ENCODE measurements at regions of chr20 and their contacts with region 1.

Region 1: DNA sequence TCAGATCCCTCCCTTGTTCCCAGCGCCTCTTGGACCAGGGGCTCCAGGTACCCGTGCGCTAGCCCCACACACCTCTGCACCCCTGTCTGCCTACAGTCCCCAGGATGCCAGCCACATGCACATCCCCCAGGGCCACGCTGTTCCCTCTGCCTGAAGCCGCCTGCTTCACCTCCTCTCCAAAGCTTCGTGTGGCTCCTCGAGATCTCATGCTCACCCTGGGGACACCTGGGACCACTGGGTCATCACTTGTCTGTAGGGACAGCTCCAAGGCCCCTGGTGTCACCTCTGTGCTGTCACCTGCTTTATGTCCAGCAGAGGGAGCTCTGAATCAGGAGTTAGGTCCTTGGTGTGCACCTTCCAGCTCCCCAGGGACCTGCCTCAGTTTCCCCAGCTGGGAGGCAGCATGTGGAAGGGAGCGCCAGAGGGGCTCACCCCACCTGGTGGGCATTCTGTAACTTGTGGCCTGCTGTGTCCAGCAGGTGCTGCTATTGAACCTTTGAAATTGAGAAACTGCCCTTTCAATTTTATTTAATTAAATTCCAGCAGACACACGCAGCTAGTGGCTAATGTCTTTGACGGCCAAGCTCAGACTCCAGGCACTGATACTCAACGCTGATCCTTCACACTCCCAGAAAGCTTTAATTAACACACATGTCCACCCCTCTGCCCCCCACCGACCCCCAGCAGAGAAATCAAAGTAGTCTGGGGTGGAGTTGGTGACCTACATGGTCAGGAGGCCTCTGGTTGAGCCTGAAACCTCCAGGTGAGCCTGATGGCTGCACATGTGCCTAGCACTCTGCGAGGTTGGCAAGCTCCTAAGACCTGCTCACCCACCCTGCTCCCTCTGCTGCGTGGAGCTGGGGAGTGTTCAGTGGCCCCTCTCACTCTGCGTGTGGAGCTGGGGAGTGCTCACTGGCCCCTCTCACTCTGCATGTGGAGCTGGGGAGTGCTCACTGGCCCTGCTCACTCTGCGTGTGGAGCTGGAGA is 7.6 kb upstream of the YTHDF1 start:
- DNase-seq: peak; percentile 68
- ATAC-seq: peak; percentile 80
- H3K4me3 Mint-ChIP-seq: no peak overlapping the region
- H3K27ac Mint-ChIP-seq: no peak overlapping the region
- H3K4me1 Mint-ChIP-seq: no peaks in the 10 kb centered on the region
- H3K27me3 Mint-ChIP-seq: no peaks in the 10 kb centered on the region
- CTCF ChIP-seq: peak; percentile 97

Region 2: GRCh38 chr20:62793912-62794724 is 429.4 kb before region 1 on chr20:
- CTCF ChIA-PET with region 1: no interaction called
- POLR2A ChIA-PET with region 1: no interaction called
- intact Hi-C with region 1: no loop called
- DNase-seq: peak; percentile 97
- ATAC-seq: peak; percentile 82
- H3K4me3 Mint-ChIP-seq: peak overlapping the region; percentile 83
- H3K27ac Mint-ChIP-seq: peak overlapping the region; percentile 91
- H3K4me1 Mint-ChIP-seq: peaks cover 34% of the 10 kb centered on the region
- H3K27me3 Mint-ChIP-seq: no peaks in the 10 kb centered on the region
- CTCF ChIP-seq: no peak

Region 3: DNA sequence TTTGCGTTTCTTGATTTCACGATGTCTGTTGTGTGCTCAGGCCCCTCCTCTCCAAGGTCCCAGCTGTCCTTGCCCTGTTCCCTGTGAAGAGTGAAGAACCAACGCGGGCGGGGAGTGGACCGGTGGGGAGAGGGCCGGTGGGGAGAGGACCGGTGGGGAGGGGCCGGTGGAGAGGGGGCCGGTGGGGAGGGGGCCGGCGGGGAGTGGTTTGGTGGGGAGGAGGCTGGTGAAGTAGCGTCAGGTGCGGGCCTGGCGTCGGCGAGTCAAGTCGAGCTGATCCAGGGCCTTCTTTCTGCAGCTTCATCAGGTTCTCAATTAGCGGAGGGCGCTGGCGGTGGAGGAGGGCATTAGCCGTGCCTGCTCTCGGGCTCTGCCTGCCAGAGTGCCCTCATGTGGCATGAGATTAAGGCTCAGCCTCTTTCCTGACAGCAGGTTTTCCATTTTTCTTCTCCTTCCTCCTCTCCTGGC is 195.6 kb before region 1 on chr20:
- CTCF ChIA-PET with region 1: no interaction called
- POLR2A ChIA-PET with region 1: no interaction called
- intact Hi-C with region 1: no loop called
- DNase-seq: peak; percentile 59
- ATAC-seq: peak; percentile 55
- H3K4me3 Mint-ChIP-seq: peak overlapping the region; percentile 37
- H3K27ac Mint-ChIP-seq: no peak overlapping the region
- H3K4me1 Mint-ChIP-seq: peaks cover 21% of the 10 kb centered on the region
- H3K27me3 Mint-ChIP-seq: peaks cover 20% of the 10 kb centered on the region
- CTCF ChIP-seq: no peak

Region 4: GRCh38 chr20:63196768-63197470 is 26.6 kb before region 1 on chr20:
- CTCF ChIA-PET with region 1: interaction called, 23 read pairs
- POLR2A ChIA-PET with region 1: no interaction called
- intact Hi-C with region 1: no loop called
- DNase-seq: no peak
- ATAC-seq: no peak
- H3K4me3 Mint-ChIP-seq: no peak overlapping the region
- H3K27ac Mint-ChIP-seq: peak overlapping the region; percentile 75
- H3K4me1 Mint-ChIP-seq: peaks cover 37% of the 10 kb centered on the region
- H3K27me3 Mint-ChIP-seq: no peaks in the 10 kb centered on the region
- CTCF ChIP-seq: no peak

Region 5: GRCh38 chr20:63234739-63235398 is 11.4 kb after region 1 on chr20:
- CTCF ChIA-PET with region 1: interaction called, 95 read pairs
- POLR2A ChIA-PET with region 1: interaction called, 3 read pairs
- intact Hi-C with region 1: no loop called
- DNase-seq: peak; percentile 58
- ATAC-seq: peak; percentile 52
- H3K4me3 Mint-ChIP-seq: peak overlapping the region; percentile 15
- H3K27ac Mint-ChIP-seq: no peak overlapping the region
- H3K4me1 Mint-ChIP-seq: peaks cover 8% of the 10 kb centered on the region
- H3K27me3 Mint-ChIP-seq: peaks cover 21% of the 10 kb centered on the region
- CTCF ChIP-seq: peak; percentile 69

Region 6: DNA sequence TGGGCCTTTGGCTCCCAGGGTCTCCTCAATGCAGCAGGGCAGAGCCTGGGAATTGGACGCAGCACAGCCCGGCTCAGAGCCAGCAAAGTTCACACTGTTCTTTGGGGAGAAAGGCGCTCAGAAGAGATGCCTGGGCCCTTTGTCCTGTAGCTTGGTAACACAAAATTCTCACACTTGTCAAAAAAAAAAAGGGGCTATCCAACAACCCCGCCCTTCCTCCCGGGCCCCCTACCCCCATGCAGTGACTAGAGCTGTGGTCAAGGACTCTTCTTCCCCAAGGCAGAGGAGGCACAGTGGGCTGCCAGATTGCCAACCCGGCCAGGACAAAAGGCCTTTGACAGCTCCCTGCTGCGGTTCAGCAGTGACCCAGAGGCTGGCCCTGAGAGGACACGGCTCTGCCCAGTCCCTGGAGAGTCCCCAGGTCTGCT is 28.8 kb after region 1 on chr20:
- CTCF ChIA-PET with region 1: interaction called, 12 read pairs
- POLR2A ChIA-PET with region 1: no interaction called
- intact Hi-C with region 1: no loop called
- DNase-seq: no peak
- ATAC-seq: no peak
- H3K4me3 Mint-ChIP-seq: no peak overlapping the region
- H3K27ac Mint-ChIP-seq: no peak overlapping the region
- H3K4me1 Mint-ChIP-seq: peaks cover 4% of the 10 kb centered on the region
- H3K27me3 Mint-ChIP-seq: peaks cover 41% of the 10 kb centered on the region
- CTCF ChIP-seq: no peak

Region 7: DNA sequence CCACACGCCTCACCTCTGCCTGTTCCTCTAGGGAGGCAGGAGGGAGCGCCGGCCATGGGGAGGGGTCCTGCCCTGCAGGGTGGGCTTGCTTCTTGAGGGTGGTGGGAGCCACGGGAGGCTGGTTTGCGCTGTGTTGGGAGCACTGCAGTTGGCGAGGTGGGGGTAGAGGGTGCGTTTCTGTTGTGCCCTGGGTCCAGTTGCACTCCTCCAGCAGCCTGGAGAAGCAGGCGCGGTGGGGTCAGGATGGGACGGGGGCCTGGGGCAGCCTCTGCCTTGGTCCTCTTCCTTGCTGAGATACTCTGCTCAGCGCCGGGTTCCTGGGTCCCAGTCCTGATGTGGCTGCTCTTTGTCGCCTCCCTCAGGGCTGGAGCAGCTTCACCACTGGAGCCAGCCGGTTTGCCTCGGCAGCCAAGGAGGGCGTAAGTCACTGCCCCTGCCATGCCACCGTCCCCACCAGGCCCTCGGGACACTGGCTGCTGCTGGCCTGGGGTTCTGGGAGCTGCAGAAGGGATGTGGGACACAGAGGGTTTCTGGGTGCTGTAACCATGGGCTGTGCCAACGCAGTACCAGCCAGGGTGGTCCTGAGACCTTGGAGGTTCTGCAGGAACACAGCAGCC is 57.5 kb after region 1 on chr20:
- CTCF ChIA-PET with region 1: interaction called, 18 read pairs
- POLR2A ChIA-PET with region 1: no interaction called
- intact Hi-C with region 1: no loop called
- DNase-seq: no peak
- ATAC-seq: no peak
- H3K4me3 Mint-ChIP-seq: no peak overlapping the region
- H3K27ac Mint-ChIP-seq: no peak overlapping the region
- H3K4me1 Mint-ChIP-seq: peaks cover 3% of the 10 kb centered on the region
- H3K27me3 Mint-ChIP-seq: no peaks in the 10 kb centered on the region
- CTCF ChIP-seq: no peak

Region 8: GRCh38 chr20:63309261-63310071 is 86.0 kb after region 1 on chr20:
- CTCF ChIA-PET with region 1: interaction called, 10 read pairs
- POLR2A ChIA-PET with region 1: no interaction called
- intact Hi-C with region 1: no loop called
- DNase-seq: peak; percentile 44
- ATAC-seq: peak; percentile 74
- H3K4me3 Mint-ChIP-seq: no peak overlapping the region
- H3K27ac Mint-ChIP-seq: no peak overlapping the region
- H3K4me1 Mint-ChIP-seq: no peaks in the 10 kb centered on the region
- H3K27me3 Mint-ChIP-seq: peaks cover 9% of the 10 kb centered on the region
- CTCF ChIP-seq: peak; percentile 84